ENCODE measurements at regions of chr11 and their contacts with region 1.

Region 1: GRCh38 chr11:45147017-45147728 is 734 bp downstream of the PRDM11 start:
- DNase-seq: peak; percentile 86 to 93 (median 91)
- ATAC-seq: peak; percentile 98
- H3K4me3 ChIP-seq: peak overlapping the region; percentile 68
- H3K4me3 Mint-ChIP-seq: peak overlapping the region; percentile 85 to 95 (median 92)
- H3K27ac ChIP-seq: peak overlapping the region; percentile 79
- H3K27ac Mint-ChIP-seq: peak overlapping the region; percentile 47 to 95 (median 87)
- H3K4me1 ChIP-seq: peaks cover 13 to 14% of the 10 kb centered on the region in 2 donors
- H3K4me1 Mint-ChIP-seq: peaks cover 13 to 47% (median 43%) of the 10 kb centered on the region in 7 donors
- H3K27me3 ChIP-seq: no peaks in the 10 kb centered on the region
- H3K27me3 Mint-ChIP-seq: peaks cover 4 to 45% (median 10%) of the 10 kb centered on the region in 5 donors

Region 2: GRCh38 chr11:43880640-43881159 is 1266.5 kb before region 1 on chr11 and contains the start of gene ALKBH3:
- CTCF ChIA-PET with region 1: no interaction called
- POLR2A ChIA-PET with region 1: no interaction called
- intact Hi-C with region 1: loop called in 1 of 2 experiments (anchors 2 kb)
- DNase-seq: peak; percentile 78 to 92 (median 90)
- ATAC-seq: peak; percentile 100
- H3K4me3 ChIP-seq: peak within 1 kb of the TSS; percentile 90
- H3K4me3 Mint-ChIP-seq: peak within 1 kb of the TSS; percentile 87 to 96 (median 90)
- H3K27ac ChIP-seq: peak within 1 kb of the TSS; percentile 80
- H3K27ac Mint-ChIP-seq: peak within 1 kb of the TSS; percentile 82 to 97 (median 88)
- H3K4me1 ChIP-seq: peaks cover 16 to 19% of the 10 kb centered on the region in 2 donors
- H3K4me1 Mint-ChIP-seq: peaks cover 12 to 47% (median 36%) of the 10 kb centered on the region in 7 donors
- H3K27me3 ChIP-seq: no peaks in the 10 kb centered on the region
- H3K27me3 Mint-ChIP-seq: peaks cover 0 to 22% (median 13%) of the 10 kb centered on the region in 5 donors
- total RNA-seq, gene ALKBH3: 28.9 to 32.8 (median 30.2) TPM

Region 3: GRCh38 chr11:45079943-45080719 is 67.0 kb before region 1 on chr11:
- CTCF ChIA-PET with region 1: no interaction called
- POLR2A ChIA-PET with region 1: no interaction called
- intact Hi-C with region 1: loop called in 1 of 2 experiments (anchors 1 kb)
- DNase-seq: peak; percentile 22 to 70 (median 65)
- ATAC-seq: peak; percentile 86
- H3K4me3 ChIP-seq: peak overlapping the region; percentile 42
- H3K4me3 Mint-ChIP-seq: peak overlapping the region; percentile 39 to 82 (median 72)
- H3K27ac ChIP-seq: peak overlapping the region; percentile 60
- H3K27ac Mint-ChIP-seq: peak overlapping the region; percentile 88 to 96 (median 93)
- H3K4me1 ChIP-seq: peaks cover 32 to 62% of the 10 kb centered on the region in 2 donors
- H3K4me1 Mint-ChIP-seq: peaks cover 29 to 63% (median 55%) of the 10 kb centered on the region in 7 donors
- H3K27me3 ChIP-seq: no peaks in the 10 kb centered on the region
- H3K27me3 Mint-ChIP-seq: peaks cover 0 to 4% (median 0%) of the 10 kb centered on the region in 5 donors

Region 4: DNA sequence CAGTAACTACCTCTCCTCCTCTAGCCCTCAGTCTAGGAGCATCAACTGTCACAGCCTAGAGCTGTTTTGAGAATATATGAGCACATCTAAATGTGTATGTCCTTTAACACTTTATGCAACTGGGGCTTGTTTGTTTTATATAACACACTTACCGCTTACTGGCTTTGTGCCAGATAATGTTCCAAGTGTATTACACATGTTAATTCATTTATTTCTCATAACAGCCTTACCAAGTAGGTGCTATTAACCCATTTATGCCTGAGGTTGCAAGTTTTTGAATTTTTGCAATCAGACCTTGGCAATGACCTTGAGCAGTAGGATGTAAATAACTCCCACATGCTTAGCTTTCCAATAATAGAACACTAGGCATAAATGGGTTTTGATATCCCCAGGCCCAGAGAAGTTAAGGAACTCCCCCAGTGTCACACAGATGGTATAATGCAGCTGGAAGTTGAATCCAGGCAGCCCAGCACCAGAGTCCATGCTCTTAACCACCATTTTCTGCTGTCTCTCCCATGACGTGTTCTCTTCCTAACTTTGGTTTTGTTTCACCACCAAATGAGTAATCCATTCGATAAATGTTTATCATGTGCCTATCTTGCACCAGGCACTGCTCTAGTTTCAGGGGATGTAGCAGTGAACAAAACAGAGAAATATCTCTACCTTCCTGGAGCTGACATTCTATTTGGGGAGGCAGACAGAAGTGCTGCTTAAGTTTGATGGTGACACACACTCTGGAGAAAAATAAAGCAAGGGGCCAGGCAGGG is 22.3 kb after region 1 on chr11:
- CTCF ChIA-PET with region 1: no interaction called
- POLR2A ChIA-PET with region 1: no interaction called
- intact Hi-C with region 1: no loop called
- DNase-seq: no peak
- ATAC-seq: no peak
- H3K4me3 ChIP-seq: no peak overlapping the region
- H3K4me3 Mint-ChIP-seq: no peak overlapping the region
- H3K27ac ChIP-seq: no peak overlapping the region
- H3K27ac Mint-ChIP-seq: peak overlapping the region in 1 of 9 donors; percentile 84
- H3K4me1 ChIP-seq: no peaks in the 10 kb centered on the region
- H3K4me1 Mint-ChIP-seq: peaks cover 0 to 11% (median 4%) of the 10 kb centered on the region in 7 donors
- H3K27me3 ChIP-seq: no peaks in the 10 kb centered on the region
- H3K27me3 Mint-ChIP-seq: peaks cover 0 to 5% (median 0%) of the 10 kb centered on the region in 5 donors

Region 5: DNA sequence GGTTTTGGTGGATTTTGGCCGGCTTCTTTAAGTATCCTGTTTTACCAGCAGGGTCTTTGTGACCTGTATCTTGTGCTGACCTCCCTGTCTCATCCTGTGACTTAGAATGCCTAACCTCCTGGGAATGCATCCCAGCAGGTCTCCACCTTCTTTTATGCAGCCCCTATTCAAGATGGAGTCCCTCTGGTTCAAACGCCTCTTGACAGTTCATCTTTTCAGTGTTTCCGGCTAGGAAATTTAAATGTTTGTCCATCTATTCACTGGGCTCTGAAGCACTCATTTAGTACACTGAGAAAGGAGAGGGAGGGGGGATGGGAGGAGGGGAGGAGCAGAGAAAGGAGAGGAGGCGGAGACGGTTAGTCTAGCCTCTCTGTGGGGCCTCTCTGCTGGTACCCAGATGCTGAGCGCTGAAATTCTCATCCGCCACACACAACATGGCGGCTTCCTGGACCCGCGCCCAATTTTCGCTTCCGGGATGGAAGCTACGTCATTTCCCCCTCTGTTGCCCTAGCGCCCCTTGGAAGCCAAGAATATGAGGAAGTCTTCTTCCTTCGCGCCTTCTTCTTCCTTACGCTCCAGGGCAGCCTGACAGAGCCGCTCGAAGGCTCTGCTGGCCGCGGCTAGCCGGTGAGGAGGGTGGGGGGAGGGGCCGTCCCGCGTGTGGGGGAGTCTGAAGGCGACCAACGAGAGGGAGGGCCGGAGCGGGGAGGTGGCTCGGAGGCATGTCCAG is 208.0 kb after region 1 on chr11:
- CTCF ChIA-PET with region 1: no interaction called
- POLR2A ChIA-PET with region 1: no interaction called
- intact Hi-C with region 1: loop called in 1 of 2 experiments (anchors 1 kb)
- DNase-seq: peak; percentile 77 to 91 (median 88)
- ATAC-seq: peak; percentile 96
- H3K4me3 ChIP-seq: peak overlapping the region; percentile 93
- H3K4me3 Mint-ChIP-seq: peak overlapping the region; percentile 75 to 87 (median 82)
- H3K27ac ChIP-seq: peak overlapping the region; percentile 73
- H3K27ac Mint-ChIP-seq: peak overlapping the region; percentile 70 to 91 (median 83)
- H3K4me1 ChIP-seq: peaks cover 0 to 5% of the 10 kb centered on the region in 2 donors
- H3K4me1 Mint-ChIP-seq: peaks cover 9 to 31% (median 26%) of the 10 kb centered on the region in 7 donors
- H3K27me3 ChIP-seq: no peaks in the 10 kb centered on the region
- H3K27me3 Mint-ChIP-seq: peaks cover 0 to 28% (median 7%) of the 10 kb centered on the region in 5 donors

Measured in naive thymus-derived CD4-positive, alpha-beta T cell (primary cell).